Ovary (tissue), 10 donors: ENCODE measurements at regions of chr9 and their contacts with region 1.

Region 1: DNA sequence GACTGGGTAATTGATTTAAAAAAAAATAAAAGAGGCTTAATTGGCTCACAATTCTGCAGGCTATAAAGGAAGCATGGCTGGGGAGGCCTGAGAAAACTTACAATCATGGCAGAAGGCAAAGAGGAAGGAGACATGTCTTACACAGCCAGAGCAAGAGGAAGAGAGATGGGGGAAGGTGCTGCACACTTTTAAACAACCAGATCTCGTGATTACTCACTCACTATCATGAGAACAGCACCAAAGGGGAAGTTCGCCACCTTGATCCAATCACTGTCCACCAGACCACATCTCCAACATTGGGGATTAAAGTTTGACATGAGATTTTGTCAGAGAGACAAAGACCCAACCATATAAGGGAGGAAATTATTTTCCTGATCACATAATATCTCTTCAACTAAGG is 138.8 kb upstream of the NR4A3 start:
- DNase-seq: no peak
- H3K4me3 ChIP-seq: no peak overlapping the region
- H3K27ac ChIP-seq: no peak overlapping the region
- H3K4me1 ChIP-seq: no peaks in the 10 kb centered on the region
- H3K27me3 ChIP-seq: no peaks in the 10 kb centered on the region
- CTCF ChIP-seq: no peak
- EP300 ChIP-seq: no peak
- POLR2A ChIP-seq: no peak

Region 2: GRCh38 chr9:99445371-99445891 is 237.4 kb before region 1 on chr9:
- intact Hi-C with region 1: no loop called
- DNase-seq: no peak
- H3K4me3 ChIP-seq: no peak overlapping the region
- H3K27ac ChIP-seq: no peak overlapping the region
- H3K4me1 ChIP-seq: no peaks in the 10 kb centered on the region
- H3K27me3 ChIP-seq: no peaks in the 10 kb centered on the region
- CTCF ChIP-seq: no peak
- EP300 ChIP-seq: no peak
- POLR2A ChIP-seq: no peak

Region 3: DNA sequence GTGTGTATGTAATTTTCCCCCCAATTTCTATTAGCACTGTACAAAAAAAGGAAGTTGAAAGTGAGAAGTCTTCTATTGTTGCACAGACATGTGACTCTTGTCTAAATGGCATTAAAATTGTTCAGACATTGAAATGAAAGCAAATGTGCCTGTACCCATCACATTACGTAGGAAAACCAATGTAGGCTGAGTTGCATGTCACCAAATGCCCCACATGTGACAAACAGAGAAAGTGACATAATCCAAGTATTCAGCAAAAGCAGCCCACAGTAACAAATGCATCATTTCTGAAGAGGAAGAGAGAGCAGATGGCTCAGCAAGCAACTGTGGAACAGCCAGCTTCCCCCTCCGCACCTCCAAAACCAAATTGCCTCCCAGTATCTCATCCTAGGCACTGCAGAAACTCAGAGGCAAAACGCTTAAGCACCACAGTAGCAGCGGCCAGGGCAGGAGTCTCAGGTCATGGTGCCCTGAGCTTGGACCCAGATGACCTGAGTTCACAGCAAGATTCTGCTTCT is 22.6 kb before region 1 on chr9:
- intact Hi-C with region 1: loop called in 1 of 4 experiments (anchors 2 kb)
- DNase-seq: no peak
- H3K4me3 ChIP-seq: no peak overlapping the region
- H3K27ac ChIP-seq: no peak overlapping the region
- H3K4me1 ChIP-seq: no peaks in the 10 kb centered on the region
- H3K27me3 ChIP-seq: no peaks in the 10 kb centered on the region
- CTCF ChIP-seq: no peak
- EP300 ChIP-seq: no peak
- POLR2A ChIP-seq: no peak